ENCODE measurements at regions of chr1 and their contacts with region 1.

Region 1: DNA sequence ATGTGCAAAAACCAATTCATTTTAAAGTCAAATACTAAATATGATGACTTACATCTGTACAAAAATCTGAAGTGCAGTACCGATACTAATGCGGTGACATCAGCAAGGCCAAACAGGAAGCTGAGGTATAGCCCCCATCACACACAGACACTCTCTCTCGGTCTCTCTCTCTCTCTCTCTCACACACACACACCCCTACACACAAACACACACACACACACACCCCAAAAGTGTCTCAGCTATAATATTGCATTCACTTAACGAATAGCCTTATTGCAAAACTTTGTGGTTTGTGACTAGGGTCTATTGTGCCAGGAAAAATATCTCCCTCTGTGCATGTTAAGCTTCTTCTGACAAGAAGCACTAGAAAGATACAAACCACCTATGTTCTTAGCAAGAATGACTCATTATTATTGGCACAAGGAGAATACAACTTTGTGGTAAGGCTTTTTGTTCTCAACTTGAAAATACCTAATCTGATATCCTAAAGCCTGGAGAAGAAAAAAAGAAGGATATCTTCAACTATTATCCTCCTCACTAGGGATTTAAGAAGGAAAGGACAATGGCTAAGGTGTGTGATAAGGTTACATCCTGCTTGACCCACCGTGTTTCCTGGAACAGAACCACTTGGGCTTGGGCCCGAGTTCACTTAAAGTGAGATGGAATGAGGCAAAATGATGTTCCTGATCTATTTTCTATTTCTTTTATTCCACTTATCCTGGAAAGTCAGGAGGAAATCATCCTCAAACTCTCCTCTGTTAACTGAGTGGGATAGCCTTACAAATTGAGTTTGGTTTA is 107.1 kb downstream of the NIBAN1 start:
- DNase-seq: peak; percentile 44
- H3K4me3 Mint-ChIP-seq: peak overlapping the region; percentile 38
- H3K27ac Mint-ChIP-seq: peak overlapping the region; percentile 90
- H3K4me1 Mint-ChIP-seq: peaks cover 40% of the 10 kb centered on the region
- H3K27me3 Mint-ChIP-seq: no peaks in the 10 kb centered on the region

Region 2: GRCh38 chr1:184881941-184882913 is 15.0 kb after region 1 on chr1:
- intact Hi-C with region 1: loop called (anchors 1 kb)
- DNase-seq: no peak
- H3K4me3 Mint-ChIP-seq: peak overlapping the region; percentile 32
- H3K27ac Mint-ChIP-seq: peak overlapping the region; percentile 78
- H3K4me1 Mint-ChIP-seq: peaks cover 23% of the 10 kb centered on the region
- H3K27me3 Mint-ChIP-seq: no peaks in the 10 kb centered on the region

Region 3: DNA sequence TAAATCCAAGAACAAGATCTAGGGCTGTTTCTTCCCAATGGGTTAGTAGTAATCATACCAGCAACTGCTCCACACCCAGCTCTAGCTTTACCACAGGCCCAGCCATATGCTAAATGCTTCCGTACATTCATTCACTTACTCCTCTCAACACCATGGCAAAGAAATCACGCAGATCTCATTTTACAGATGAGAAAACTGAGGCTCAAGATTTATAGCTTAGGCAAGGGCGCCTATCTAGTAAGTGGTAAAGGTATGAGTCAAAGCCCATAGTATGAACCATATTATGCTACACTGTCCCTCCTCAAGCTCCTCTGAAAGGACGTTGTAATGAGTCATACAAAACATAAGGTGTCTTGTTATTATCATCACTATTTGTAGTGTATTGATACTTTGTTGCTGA is 24.9 kb after region 1 on chr1:
- intact Hi-C with region 1: loop called (anchors 1 kb)
- DNase-seq: no peak
- H3K4me3 Mint-ChIP-seq: no peak overlapping the region
- H3K27ac Mint-ChIP-seq: peak overlapping the region; percentile 61
- H3K4me1 Mint-ChIP-seq: peaks cover 39% of the 10 kb centered on the region
- H3K27me3 Mint-ChIP-seq: no peaks in the 10 kb centered on the region

Region 4: DNA sequence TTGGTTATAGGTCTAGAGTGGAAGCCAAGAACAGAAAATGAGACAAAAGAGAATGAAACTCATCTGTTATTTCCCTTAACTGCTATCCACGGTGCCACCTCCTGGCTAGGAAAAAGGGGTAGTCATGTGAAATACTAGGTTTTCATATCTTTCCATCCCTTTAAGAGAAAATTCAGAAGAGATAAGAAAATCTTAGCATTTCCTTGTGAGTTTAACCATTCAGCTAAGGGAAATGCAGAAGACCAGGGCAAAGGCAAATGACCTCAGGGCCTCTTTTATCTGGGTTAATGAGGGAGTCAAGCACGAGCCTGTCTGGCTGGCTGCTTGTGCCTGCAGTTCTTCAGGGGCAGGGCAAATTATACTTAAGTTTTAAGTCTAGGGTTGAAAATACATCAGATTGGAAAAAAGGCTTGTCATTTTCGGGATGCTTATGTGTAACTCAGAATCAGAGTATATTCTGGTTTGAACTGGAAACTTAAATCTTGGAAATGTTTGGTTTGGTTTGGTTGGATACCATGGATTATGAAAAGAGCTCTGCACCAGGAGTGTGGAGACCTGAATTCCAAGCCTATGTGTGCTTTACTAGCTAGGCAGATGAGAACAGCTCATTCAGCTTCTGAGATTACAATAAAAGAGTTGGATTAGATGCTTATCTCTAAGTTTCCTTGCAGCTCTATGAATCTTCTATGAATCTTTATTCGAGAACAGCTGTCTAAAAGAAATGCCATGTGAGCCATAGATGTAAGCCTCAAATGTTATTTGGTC is 87.2 kb after region 1 on chr1:
- intact Hi-C with region 1: loop called (anchors 1 kb)
- DNase-seq: no peak
- H3K4me3 Mint-ChIP-seq: peak overlapping the region; percentile 50
- H3K27ac Mint-ChIP-seq: peak overlapping the region; percentile 78
- H3K4me1 Mint-ChIP-seq: peaks cover 19% of the 10 kb centered on the region
- H3K27me3 Mint-ChIP-seq: peaks cover 2% of the 10 kb centered on the region

Region 5: GRCh38 chr1:185044981-185045813 is 178.0 kb after region 1 on chr1 and contains the start of gene RNF2:
- intact Hi-C with region 1: loop called (anchors 10 kb)
- DNase-seq: peak; percentile 65
- H3K4me3 Mint-ChIP-seq: peak within 1 kb of the TSS; percentile 89
- H3K27ac Mint-ChIP-seq: peak within 1 kb of the TSS; percentile 82
- H3K4me1 Mint-ChIP-seq: peaks cover 29% of the 10 kb centered on the region
- H3K27me3 Mint-ChIP-seq: peaks cover 15% of the 10 kb centered on the region
- total RNA-seq, gene RNF2: 24.1 and 24.4 TPM in 2 replicates

Region 6: GRCh38 chr1:186295980-186296379 is 1428.8 kb after region 1 on chr1:
- intact Hi-C with region 1: loop called (anchors 10 kb)
- DNase-seq: no peak
- H3K4me3 Mint-ChIP-seq: peak within 1 kb of the TSS; percentile 50
- H3K27ac Mint-ChIP-seq: peak within 1 kb of the TSS; percentile 61
- H3K4me1 Mint-ChIP-seq: peaks cover 78% of the 10 kb centered on the region
- H3K27me3 Mint-ChIP-seq: no peaks in the 10 kb centered on the region